ENCODE measurements at regions of chr5 and their contacts with region 1.

Region 1: GRCh38 chr5:61331407-61332357 is at the start of gene ZSWIM6:
- DNase-seq: peak; percentile 99 to 100
- ATAC-seq: peak; percentile 91 to 99 (median 96)
- H3K4me3 ChIP-seq: peak within 1 kb of the TSS; percentile 80 to 99 (median 90)
- H3K27ac ChIP-seq: peak within 1 kb of the TSS; percentile 81 to 99 (median 94)
- H3K4me1 ChIP-seq: peaks cover 5 to 54% (median 31%) of the 10 kb centered on the region in 9 donors
- H3K27me3 ChIP-seq: peaks cover 0 to 3% (median 0%) of the 10 kb centered on the region in 7 donors
- CTCF ChIP-seq: peak in 1 of 9 donors; percentile 13
- total RNA-seq, gene ZSWIM6: 5.9 to 10.3 (median 7.2) TPM

Region 2: DNA sequence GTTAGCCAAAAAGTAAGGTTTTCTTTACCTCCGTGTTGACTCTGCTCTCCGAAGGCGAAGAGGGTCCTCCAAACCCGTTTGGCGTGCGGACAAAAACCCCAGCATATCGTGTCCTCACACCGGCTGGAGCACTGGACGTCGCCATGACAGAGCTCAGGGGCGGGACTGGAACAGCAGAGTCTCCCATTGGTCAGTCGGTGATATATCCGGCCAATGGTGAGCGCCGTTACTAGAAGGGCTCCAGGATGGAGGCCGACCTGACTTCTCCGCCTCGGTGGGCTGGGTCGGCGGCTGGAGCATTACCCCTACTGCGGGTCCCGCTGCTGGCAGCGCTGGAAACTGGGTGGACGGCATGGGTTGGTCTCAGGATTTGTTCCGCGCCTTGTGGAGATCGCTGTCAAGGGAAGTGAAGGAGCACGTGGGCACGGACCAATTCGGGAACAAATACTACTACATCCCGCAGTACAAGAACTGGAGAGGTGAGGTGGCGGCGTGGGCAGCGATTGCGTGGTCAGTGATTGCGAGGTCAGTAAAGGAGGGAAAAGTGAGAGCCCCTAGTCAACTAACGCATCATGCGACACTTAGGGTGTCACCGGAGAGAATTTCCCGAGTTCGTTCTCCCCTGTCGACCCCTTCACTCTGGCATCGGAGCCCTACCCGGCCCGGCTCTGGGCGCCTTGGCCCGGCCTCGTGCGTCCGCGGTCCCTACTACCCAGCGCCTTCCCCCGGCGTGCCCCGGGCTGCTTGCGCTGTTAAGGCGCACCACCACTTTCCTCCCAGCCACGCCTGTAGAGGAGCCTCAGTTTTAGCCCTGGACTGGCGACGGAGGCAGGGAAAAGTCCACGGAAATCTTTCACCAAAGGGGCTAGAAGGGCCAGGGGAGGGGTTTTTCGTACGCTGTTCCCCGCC is 386.5 kb before region 1 on chr5 and contains the starts of genes ERCC8 and NDUFAF2:
- intact Hi-C with region 1: loop called in 2 of 10 experiments (anchors 10 kb)
- DNase-seq: peak; percentile 85 to 92
- ATAC-seq: peak; percentile 99 to 100 (median 100)
- H3K4me3 ChIP-seq: peak within 1 kb of the TSS; percentile 62 to 88 (median 74)
- H3K27ac ChIP-seq: peak within 1 kb of the TSS; percentile 23 to 86 (median 81)
- H3K4me1 ChIP-seq: peaks cover 6 to 32% (median 23%) of the 10 kb centered on the region in 9 donors
- H3K27me3 ChIP-seq: no peaks in the 10 kb centered on the region
- CTCF ChIP-seq: no peak
- total RNA-seq, gene ERCC8: 4.1 to 8.3 (median 6.8) TPM
- total RNA-seq, gene NDUFAF2: 23.0 to 49.2 (median 29.9) TPM

Region 3: GRCh38 chr5:61055434-61056006 is 276.2 kb before region 1 on chr5:
- intact Hi-C with region 1: loop called in 3 of 10 experiments (anchors 10 kb)
- DNase-seq: no peak
- ATAC-seq: peak in 1 of 8 donors; percentile 41
- H3K4me3 ChIP-seq: no peak overlapping the region
- H3K27ac ChIP-seq: no peak overlapping the region
- H3K4me1 ChIP-seq: no peaks in the 10 kb centered on the region
- H3K27me3 ChIP-seq: no peaks in the 10 kb centered on the region
- CTCF ChIP-seq: peak; percentile 27 to 75 (median 65)

Region 4: DNA sequence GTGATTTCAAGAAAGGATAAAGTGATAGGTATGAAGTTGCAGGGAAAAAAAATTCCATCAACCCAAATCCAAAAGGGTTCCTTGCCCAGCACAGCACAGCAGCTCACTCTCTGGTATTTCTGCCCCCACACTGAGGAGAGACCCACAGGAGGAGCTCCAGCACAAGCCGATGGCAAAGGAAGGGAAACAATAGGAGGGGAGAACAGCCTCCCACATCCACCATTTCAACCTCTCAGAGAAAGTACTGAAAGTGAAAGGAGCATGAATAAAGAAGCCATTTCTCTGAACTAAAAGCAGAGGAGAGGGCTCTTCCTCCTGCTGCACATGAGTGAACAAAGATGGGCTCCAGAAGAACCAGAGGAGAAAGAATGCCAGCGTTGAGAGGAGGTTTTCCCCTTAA is 54.5 kb before region 1 on chr5:
- intact Hi-C with region 1: loop called in 1 of 10 experiments (anchors 5 kb)
- DNase-seq: peak in 1 of 2 donors; percentile 20
- ATAC-seq: peak in 6 of 8 donors; percentile 30 to 74 (median 64)
- H3K4me3 ChIP-seq: peak overlapping the region in 5 of 10 donors; percentile 8 to 28 (median 19)
- H3K27ac ChIP-seq: peak overlapping the region in 3 of 10 donors; percentile 5 to 88 (median 53)
- H3K4me1 ChIP-seq: peaks cover 0 to 76% (median 6%) of the 10 kb centered on the region in 9 donors
- H3K27me3 ChIP-seq: no peaks in the 10 kb centered on the region
- CTCF ChIP-seq: peak in 6 of 9 donors; percentile 21 to 57 (median 38)

Region 5: DNA sequence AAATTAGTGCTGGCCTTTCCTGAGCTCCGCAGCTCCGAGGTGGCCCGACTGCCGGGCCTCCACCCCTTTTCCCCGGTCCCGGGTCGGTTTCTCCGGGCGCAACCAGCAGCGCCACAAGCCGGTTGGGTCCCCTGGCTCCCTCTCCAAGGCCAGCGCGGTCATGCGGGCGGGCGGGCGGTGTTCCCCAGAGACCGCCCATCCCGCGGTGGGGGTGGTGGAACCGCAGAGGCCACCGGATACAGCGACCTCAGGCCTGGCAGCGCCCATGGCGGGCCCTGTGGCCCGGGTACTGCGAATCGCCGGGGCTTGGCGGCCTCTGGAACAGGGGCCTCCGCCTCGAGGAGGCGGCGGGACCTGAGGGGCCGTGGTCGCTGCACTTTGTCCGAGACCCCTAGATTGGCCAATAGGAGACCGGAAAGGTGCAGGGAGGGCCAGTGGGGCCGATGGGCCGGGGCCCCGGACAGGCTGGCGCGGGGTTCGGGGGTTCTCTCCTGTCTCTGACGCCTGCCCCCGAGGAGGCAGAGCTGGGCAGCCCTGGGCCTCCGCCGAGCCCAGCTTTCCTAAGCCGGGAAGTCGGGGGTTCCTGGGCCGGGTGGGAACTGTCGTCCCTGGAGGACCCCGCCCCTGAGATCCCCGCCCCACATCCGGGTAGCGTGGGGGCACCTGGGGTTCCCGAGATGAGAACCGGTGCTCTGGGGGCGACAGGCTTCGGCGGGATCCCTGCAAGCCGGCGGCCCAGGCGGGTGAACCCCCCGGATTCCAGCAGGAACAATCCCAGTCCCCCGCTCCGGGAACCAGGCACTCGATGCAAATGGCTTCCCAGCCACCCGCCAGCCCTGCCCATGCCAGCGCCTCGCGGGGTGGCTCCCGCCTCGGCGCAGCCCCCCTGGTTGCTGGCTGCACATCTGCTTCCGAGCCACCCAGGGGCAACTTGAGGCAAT is 294.3 kb after region 1 on chr5:
- intact Hi-C with region 1: loop called in 4 of 10 experiments (anchors 5 to 10 kb)
- DNase-seq: peak; percentile 82 to 84
- ATAC-seq: peak; percentile 93 to 99 (median 97)
- H3K4me3 ChIP-seq: peak overlapping the region; percentile 44 to 73 (median 64)
- H3K27ac ChIP-seq: peak overlapping the region; percentile 73 to 97 (median 90)
- H3K4me1 ChIP-seq: peaks cover 4 to 28% (median 19%) of the 10 kb centered on the region in 9 donors
- H3K27me3 ChIP-seq: peaks cover 0 to 19% (median 0%) of the 10 kb centered on the region in 7 donors
- CTCF ChIP-seq: peak in 2 of 9 donors; percentile 19 to 20

Region 6: GRCh38 chr5:61666064-61666621 is 334.5 kb after region 1 on chr5:
- intact Hi-C with region 1: loop called in 1 of 10 experiments (anchors 10 kb)
- DNase-seq: peak in 1 of 2 donors; percentile 38
- ATAC-seq: peak; percentile 42 to 88 (median 80)
- H3K4me3 ChIP-seq: peak overlapping the region in 4 of 10 donors; percentile 8 to 31 (median 13)
- H3K27ac ChIP-seq: peak overlapping the region in 8 of 10 donors; percentile 12 to 71 (median 54)
- H3K4me1 ChIP-seq: peaks cover 0 to 26% (median 10%) of the 10 kb centered on the region in 9 donors
- H3K27me3 ChIP-seq: no peaks in the 10 kb centered on the region
- CTCF ChIP-seq: no peak

Measured in heart right ventricle (tissue), 16 donors.